ENCODE measurements at regions of chr4 and their contacts with region 1.

Region 1: DNA sequence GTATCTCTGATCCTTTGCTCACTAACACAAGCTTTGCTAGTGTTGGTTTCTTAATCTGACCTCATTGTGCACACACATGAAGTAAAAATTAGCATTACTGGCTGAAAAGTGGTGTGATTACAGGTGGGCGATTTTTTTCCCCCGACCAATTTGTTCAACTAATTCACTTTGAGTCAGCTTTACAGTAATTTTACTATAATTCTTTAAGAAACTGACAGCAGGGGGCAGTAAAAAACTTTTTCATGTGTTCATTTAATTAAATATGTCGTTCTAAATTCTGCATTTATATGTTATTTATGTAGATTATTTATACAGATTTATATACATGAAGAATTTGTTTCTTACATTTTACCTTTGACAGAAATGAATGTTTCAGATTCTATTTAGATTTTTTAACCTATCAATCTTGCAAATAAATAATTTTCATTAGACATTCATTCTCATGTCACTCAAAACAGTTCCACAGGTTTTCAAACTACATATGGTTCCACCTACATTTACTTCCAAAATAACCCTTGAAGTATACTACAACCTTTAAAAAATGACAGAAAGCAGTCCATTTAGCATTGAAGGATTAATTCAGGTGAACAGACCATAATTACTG is 17.5 kb downstream of the PALLD start:
- DNase-seq: no peak
- ATAC-seq: no peak

Region 2: GRCh38 chr4:168408620-168409019 is 105.7 kb before region 1 on chr4:
- intact Hi-C with region 1: no loop called
- DNase-seq: no peak
- ATAC-seq: peak; percentile 95

Region 3: DNA sequence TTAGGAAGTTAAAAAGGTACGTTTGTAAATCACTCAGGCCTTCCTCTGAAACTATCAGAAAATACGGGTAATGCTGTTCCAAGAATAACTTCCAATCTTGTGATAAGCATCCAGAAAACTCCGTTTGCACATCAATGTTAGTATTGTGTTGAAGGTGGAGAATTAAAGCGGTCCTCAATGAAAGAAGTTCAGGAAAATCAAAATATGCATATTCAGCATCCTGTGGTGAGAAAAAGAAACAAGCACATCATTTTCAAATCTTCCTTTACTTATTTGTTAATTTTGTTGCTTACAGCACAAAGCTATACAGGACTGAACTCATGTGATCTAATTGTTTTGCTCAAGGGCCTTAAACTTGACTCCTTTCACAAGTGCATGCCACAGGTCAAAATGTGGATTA is 52.5 kb before region 1 on chr4:
- intact Hi-C with region 1: no loop called
- DNase-seq: no peak
- ATAC-seq: no peak

Region 4: DNA sequence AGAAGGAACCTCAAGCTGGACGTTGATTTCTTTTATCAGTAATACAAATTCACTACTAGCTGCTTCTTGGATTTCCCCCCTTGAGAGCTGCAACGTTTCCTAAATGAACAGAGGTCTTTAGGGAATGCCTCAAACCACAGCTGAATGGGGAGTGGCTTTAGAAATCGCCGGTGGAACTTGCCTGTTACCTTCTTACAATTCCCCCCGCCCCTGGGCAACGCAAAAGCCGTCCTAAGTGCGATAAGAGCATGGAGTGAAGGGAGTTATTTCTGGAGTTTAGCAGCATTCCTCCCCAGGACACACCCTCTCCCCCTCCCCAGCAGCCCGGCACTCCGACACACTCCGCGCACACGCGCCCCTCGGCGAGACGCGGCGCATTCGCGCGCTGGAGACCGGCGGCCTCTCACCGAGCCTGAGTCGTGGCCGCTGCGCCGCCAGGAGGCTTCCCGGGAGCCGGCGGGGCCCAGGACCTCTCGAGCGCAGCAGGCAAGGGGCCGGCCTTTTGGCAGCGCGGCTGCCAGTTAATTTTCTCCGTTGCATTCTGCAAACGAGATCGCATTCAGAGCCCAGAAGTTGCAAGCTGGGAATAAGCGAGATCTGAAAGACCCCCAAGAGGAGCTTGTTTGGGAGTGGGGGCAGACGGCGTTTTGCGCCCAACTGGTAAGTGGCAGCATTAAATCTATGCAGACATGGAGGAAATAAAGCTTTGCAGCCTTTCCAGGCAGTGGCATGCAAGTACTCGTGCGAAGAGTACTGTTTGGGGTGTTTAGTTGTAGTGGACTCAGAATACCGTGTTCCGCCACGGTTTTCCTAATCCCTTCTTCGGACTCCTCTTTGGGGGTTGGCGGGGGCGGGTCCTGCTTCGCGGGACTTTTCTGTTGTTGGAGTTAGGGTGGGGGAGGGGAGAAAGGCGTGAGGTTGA is 117.2 kb after region 1 on chr4:
- intact Hi-C with region 1: loop called (anchors 5 kb)
- DNase-seq: peak; percentile 77
- ATAC-seq: peak; percentile 90

Region 5: DNA sequence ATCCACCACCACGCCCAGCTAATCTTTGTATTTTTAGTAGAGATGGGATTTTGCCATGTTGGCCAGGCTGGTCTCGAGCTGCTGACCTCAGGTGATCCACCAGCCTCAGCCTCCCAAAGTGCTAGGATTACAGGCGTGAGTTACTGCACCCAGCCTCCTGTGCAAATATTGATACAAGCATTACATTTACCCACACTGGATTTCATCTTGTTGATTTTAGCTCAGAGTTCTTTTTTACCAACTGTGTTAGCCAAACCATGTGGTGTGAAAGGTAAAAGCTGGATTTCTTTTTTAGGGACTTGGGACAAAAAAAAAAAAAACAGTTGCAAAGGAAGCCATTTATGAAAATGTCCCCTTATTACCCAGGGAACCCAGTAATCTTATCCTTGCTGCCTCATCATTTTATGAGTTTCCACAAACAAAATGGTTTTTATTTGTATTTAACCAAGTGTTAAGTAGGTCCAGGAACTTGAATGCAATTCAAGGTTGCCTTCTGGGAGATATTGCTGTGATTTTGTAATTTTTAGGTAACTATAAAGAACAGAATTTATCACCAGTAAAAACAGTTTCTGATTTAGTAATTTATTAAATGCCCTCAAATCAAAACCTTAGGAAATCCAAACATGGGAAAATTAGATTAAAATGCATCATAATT is 185.0 kb after region 1 on chr4:
- intact Hi-C with region 1: no loop called
- DNase-seq: no peak
- ATAC-seq: no peak

Region 6: DNA sequence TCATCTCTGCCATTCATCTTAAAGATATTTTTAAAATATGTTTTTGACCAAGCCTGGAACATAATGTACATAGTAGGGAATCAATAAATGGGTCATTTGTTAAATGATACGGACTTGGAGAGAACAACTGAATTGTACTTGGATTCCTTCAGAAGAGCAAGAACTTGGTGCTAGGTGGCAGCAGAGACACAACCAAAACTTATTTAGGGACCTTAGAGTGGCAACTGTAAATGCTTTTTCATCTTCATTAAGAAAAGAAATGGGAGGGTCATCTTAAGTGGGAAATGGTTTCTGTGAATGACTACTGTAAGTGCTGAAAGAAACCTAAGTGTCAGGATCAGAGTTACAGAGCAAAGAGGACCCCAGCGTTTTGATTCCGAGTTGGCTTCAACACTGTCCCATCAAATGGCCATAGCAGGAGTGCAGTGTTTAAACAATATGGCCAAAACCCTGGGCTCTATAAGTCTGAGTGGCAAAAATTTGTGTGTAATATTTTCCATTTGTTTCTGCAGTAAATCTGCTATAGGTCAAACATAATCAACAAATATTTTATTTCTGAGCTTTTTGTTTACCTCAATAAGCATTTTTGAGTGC is 196.1 kb after region 1 on chr4:
- intact Hi-C with region 1: loop called (anchors 10 kb)
- DNase-seq: no peak
- ATAC-seq: peak; percentile 69